ENCODE measurements at regions of chr12 and their contacts with region 1.

Region 1: DNA sequence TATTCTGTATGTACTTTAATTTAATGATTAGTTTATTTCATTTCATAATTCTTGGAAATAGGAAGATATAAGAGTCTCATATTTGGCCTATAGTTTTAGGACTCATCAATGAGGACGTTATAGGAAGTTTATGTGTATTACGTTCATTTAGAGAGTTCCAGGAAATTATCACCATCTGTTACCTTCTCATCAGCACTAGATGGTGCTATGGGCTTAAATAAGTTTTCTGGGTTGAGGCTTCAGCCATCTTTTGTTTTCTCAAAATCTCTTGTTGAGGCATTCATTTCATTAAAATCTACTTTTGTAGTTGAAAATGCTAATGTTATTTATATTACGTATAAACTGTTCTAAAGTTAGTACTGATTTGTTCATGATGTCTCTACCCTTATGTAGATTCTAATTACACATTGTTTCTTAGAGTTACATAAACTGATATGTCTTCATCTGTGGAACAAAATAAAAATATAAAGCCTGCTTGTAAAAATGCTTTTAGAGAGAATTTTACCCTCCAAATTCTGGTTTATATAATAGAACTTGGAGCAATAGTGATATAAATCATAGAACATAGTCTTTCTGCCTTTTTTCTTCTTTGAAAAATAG is 89.2 kb downstream of the CFAP54 start:
- DNase-seq: peak; percentile 86

Region 2: GRCh38 chr12:96471368-96472050 is 107.1 kb before region 1 on chr12:
- in situ Hi-C with region 1: no loop called
- DNase-seq: peak; percentile 26

Region 3: GRCh38 chr12:96985480-96986362 is 407.1 kb after region 1 on chr12:
- in situ Hi-C with region 1: loop called (anchors 25 kb)
- DNase-seq: peak; percentile 44